Panc1 (cell line): ENCODE measurements at regions of chr1 and their contacts with region 1.

Region 1: GRCh38 chr1:212782422-212783154 is 9.0 kb downstream of the NSL1 start:
- DNase-seq: no peak
- ATAC-seq: peak; percentile 68; the same call in 1 of the 2 replicates
- H3K4me3 ChIP-seq: no peak overlapping the region
- H3K27ac ChIP-seq: no peak overlapping the region
- H3K4me1 ChIP-seq: no peaks in the 10 kb centered on the region
- H3K27me3 ChIP-seq: no peaks in the 10 kb centered on the region
- CTCF ChIP-seq: peak; percentile 66

Region 2: DNA sequence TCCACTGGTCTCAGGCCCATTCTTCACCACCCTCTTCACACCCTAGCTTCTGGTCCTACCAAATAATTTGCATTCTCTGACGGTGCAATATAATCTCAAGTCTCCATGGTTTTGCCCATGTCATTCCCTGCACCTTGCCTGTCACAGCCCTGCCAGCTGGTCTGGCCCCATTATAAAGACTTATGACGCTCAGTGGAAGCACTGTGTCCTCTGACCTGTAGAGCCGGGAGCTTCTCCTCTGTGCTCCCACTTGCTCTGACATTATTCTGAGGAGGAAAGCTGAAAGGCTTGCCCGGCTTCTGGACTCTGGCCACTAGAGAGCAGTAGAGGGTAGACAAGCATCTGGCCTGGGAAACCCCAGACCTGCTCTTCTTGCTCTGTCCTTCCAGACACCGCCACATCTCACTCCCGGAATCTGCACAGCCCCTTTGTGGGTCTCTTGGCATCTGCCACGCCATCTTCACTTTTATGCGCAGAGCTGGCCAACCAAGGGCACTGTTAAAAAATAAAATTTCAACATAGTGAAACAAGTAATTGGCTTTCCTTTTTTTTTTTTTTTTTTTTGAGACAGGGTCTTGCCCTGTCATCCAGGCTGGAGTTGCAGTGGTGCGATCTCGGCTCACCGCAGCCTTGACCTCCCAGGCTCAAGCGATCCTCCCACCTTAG is 305.4 kb before region 1 on chr1:
- CTCF ChIA-PET with region 1: no interaction called
- POLR2A ChIA-PET with region 1: no interaction called
- in situ Hi-C with region 1: no loop called
- intact Hi-C with region 1: loop called (anchors 5 kb)
- DNase-seq: peak; percentile 81
- ATAC-seq: peak; percentile 96
- H3K4me3 ChIP-seq: no peak overlapping the region
- H3K27ac ChIP-seq: no peak overlapping the region
- H3K4me1 ChIP-seq: 0 out of 2 replicates have a peak, but pooled peaks cover 2% of the 10 kb centered on the region
- H3K27me3 ChIP-seq: no peaks in the 10 kb centered on the region
- CTCF ChIP-seq: peak; percentile 95

Region 3: DNA sequence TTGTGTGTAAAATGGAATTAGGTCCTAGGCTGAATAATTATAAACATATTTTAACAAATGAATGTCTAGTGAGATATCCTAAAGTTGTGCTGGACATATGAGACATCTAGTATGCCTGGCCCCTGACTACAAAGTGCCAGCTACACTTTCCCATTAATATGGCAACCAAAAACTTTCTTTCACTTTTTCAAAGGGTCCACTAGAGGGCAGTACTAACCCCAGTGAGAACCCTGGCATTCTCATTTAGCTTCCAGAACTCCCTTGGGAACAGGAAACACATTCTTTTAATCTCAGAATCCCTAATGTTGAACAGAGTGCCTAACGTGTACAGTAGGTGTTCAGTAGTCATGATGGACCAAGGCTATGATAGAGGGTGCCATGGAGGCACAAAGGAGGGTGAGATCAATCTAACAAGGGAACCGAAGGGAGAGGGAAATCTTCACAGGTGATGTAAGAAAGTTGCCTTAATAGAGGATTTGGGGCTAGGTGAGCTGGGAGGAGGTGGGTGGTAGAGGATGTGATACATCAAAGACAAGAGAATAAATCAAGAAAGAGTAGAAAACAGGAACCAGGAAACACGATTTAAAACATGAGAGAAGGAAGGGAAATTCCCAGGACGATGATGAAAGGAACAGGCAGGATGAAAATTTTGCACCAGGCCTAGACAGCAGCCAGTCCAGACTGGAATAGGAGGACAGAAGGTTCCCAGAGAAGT is 32.6 kb before region 1 on chr1:
- CTCF ChIA-PET with region 1: interaction called, 11 read pairs
- POLR2A ChIA-PET with region 1: no interaction called
- in situ Hi-C with region 1: no loop called
- intact Hi-C with region 1: no loop called
- DNase-seq: peak; percentile 28
- ATAC-seq: peak; percentile 89
- H3K4me3 ChIP-seq: no peak overlapping the region
- H3K27ac ChIP-seq: no peak overlapping the region
- H3K4me1 ChIP-seq: no peaks in the 10 kb centered on the region
- H3K27me3 ChIP-seq: no peaks in the 10 kb centered on the region
- CTCF ChIP-seq: peak; percentile 87